ENCODE measurements at regions of chr20 and their contacts with region 1.

Region 1: GRCh38 chr20:45523821-45524220 is 8.4 kb upstream of the SPINT3 start:
- DNase-seq: peak; percentile 38
- H3K4me3 ChIP-seq: no peak overlapping the region
- H3K27ac ChIP-seq: no peak overlapping the region
- H3K4me1 ChIP-seq: peaks cover 12% of the 10 kb centered on the region
- H3K27me3 ChIP-seq: no peaks in the 10 kb centered on the region
- CTCF ChIP-seq: no peak

Region 2: DNA sequence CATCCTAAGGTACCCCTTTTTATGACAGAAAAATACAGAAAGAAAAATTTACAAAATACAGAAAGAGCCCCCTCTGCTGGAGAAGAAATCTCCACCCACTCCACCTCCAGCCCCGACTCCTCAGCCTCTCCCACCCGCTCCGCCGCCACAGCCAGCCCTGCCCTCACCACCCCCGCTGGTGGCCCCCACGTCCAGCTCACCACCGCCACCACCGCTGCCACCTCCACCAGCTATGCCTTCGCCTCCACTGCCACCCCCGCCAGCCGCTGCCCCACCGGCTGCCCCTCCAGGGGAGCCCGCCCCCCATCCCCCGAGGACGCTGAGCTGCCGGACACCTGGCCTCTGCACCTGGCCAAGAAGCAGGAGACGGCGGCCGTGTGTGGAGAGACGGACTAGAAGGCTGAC is 36.6 kb before region 1 on chr20:
- CTCF ChIA-PET with region 1: no interaction called
- dilution Hi-C with region 1: loop called (anchors 5 kb)
- in situ Hi-C with region 1: no loop called
- intact Hi-C with region 1: no loop called
- DNase-seq: no peak
- H3K4me3 ChIP-seq: no peak overlapping the region
- H3K27ac ChIP-seq: no peak overlapping the region
- H3K4me1 ChIP-seq: peaks cover 15% of the 10 kb centered on the region
- H3K27me3 ChIP-seq: no peaks in the 10 kb centered on the region
- CTCF ChIP-seq: no peak